MCF 10A (cell line): ENCODE measurements at regions of chr6 and their contacts with region 1.

Region 1: DNA sequence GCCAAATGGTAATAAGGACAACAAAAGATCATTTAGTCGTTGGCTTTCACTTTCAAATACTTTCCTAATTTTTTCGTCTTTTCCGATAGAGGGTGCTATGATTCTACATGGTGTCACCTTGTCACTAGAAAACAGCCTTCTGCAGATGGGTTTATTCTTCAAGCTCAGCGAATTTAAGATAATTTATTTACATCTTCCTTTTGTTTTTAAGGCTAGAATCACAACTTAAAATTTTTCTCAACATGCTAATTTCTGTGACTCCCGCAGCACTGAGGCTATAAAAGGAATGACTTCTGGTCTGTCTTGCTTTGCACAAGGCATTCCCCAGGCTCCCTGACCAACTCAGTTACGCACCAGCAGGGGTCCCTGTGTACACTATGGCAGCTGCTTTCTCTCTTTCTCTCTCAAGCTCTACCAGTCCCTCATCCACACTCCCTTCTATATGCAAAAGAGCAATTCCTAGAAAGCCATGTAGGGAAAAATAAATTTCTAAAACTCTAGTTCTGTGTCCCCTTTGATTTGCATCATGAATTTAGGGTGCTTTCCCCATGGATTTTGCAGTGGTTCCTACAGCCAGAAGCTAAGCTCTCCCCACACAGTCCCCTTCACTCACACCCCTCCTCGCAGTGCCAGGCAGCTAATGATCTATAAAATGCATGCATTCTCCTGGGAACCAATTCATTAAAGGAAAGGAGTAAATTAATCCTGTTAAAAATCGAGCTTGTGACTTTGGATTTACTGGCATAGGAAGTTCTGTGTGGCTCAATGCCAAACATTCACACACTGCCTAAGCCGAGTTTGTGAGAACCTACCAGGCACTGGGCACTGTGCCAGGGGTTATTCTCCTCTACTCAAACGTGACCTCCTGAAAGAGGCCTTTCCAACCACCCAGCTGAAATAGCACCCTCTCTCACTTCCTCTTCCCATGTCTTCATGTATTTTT is 74.5 kb downstream of the DCDC2 start:
- DNase-seq: peak; percentile 82
- H3K4me3 Mint-ChIP-seq: peak overlapping the region; percentile 52
- H3K27ac Mint-ChIP-seq: no peak overlapping the region
- H3K4me1 Mint-ChIP-seq: no peaks in the 10 kb centered on the region
- H3K27me3 Mint-ChIP-seq: peaks cover 13% of the 10 kb centered on the region
- CTCF ChIP-seq: peak; percentile 75

Region 2: DNA sequence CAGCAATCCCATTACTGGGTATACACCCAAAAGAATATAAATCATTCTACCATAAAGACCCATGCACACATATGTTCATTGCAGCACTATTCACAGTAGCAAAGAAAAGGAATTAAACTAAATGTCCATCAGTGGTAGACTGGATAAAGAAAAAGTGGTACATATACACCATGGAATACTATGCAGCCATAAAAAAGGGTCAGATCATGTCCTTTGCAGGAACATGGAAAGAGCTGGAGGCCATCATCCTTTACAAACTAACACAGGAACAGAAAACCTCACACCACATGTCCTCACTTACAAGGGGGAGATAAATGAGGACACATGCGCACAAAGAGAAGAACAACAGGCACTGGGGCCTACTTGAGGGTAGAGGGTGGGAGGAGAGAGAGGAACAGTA is 13.6 kb after region 1 on chr6:
- CTCF ChIA-PET with region 1: interaction called, 22 read pairs
- POLR2A ChIA-PET with region 1: no interaction called
- intact Hi-C with region 1: no loop called
- DNase-seq: no peak
- H3K4me3 Mint-ChIP-seq: no peak overlapping the region
- H3K27ac Mint-ChIP-seq: no peak overlapping the region
- H3K4me1 Mint-ChIP-seq: no peaks in the 10 kb centered on the region
- H3K27me3 Mint-ChIP-seq: no peaks in the 10 kb centered on the region
- CTCF ChIP-seq: no peak

Region 3: GRCh38 chr6:24313251-24314141 is 30.2 kb after region 1 on chr6:
- CTCF ChIA-PET with region 1: interaction called, 13 read pairs
- POLR2A ChIA-PET with region 1: interaction called, 4 read pairs
- intact Hi-C with region 1: no loop called
- DNase-seq: peak; percentile 38
- H3K4me3 Mint-ChIP-seq: no peak overlapping the region
- H3K27ac Mint-ChIP-seq: no peak overlapping the region
- H3K4me1 Mint-ChIP-seq: peaks cover 10% of the 10 kb centered on the region
- H3K27me3 Mint-ChIP-seq: no peaks in the 10 kb centered on the region
- CTCF ChIP-seq: no peak

Region 4: GRCh38 chr6:24359640-24360454 is 76.5 kb after region 1 on chr6:
- CTCF ChIA-PET with region 1: interaction called, 27 read pairs
- POLR2A ChIA-PET with region 1: no interaction called
- intact Hi-C with region 1: loop called (anchors 1 kb)
- DNase-seq: peak; percentile 75
- H3K4me3 Mint-ChIP-seq: peak overlapping the region; percentile 74
- H3K27ac Mint-ChIP-seq: peak overlapping the region; percentile 83
- H3K4me1 Mint-ChIP-seq: peaks cover 4% of the 10 kb centered on the region
- H3K27me3 Mint-ChIP-seq: peaks cover 9% of the 10 kb centered on the region
- CTCF ChIP-seq: peak; percentile 83

Region 5: DNA sequence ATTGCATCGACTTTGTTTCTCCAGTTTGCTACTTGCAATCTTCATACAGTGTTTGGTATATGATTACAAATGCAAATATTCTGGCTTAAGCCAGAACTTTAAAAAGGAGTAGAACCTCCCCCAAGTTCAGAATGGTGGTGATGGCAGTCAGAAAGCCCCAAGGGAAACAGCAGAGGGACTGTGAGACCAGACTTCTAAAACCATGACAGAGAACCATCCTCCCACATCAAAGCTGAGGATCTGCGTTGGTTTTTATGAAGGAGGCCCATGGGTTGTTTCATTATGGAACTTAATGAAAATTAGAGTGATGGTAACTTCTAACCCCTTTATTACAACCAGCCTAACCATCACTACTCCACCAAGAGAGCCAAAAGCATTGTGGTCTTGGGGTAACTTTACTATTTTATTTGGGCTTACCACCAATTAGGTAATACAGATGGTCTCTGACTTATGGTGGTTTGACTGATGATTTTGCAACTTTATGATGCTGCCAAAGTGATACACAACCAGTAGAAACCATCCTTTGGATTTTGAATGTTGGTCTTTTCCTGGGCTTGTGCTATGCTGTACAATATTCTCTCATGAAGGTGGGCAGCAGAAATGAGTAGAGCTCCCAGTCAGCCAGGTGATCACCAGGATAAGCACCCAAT is 108.6 kb after region 1 on chr6:
- CTCF ChIA-PET with region 1: interaction called, 140 read pairs
- POLR2A ChIA-PET with region 1: interaction called, 18 read pairs
- intact Hi-C with region 1: loop called (anchors 1 kb)
- DNase-seq: no peak
- H3K4me3 Mint-ChIP-seq: no peak overlapping the region
- H3K27ac Mint-ChIP-seq: no peak overlapping the region
- H3K4me1 Mint-ChIP-seq: peaks cover 17% of the 10 kb centered on the region
- H3K27me3 Mint-ChIP-seq: no peaks in the 10 kb centered on the region
- CTCF ChIP-seq: no peak

Region 6: GRCh38 chr6:24520929-24521546 is 237.7 kb after region 1 on chr6:
- CTCF ChIA-PET with region 1: interaction called, 4 read pairs
- POLR2A ChIA-PET with region 1: no interaction called
- intact Hi-C with region 1: loop called (anchors 2 kb)
- DNase-seq: peak; percentile 63
- H3K4me3 Mint-ChIP-seq: no peak overlapping the region
- H3K27ac Mint-ChIP-seq: no peak overlapping the region
- H3K4me1 Mint-ChIP-seq: peaks cover 9% of the 10 kb centered on the region
- H3K27me3 Mint-ChIP-seq: no peaks in the 10 kb centered on the region
- CTCF ChIP-seq: peak; percentile 55

Region 7: GRCh38 chr6:25732468-25733198 is 1449.3 kb after region 1 on chr6:
- CTCF ChIA-PET with region 1: no interaction called
- POLR2A ChIA-PET with region 1: no interaction called
- intact Hi-C with region 1: no loop called
- DNase-seq: no peak
- H3K4me3 Mint-ChIP-seq: no peak overlapping the region
- H3K27ac Mint-ChIP-seq: no peak overlapping the region
- H3K4me1 Mint-ChIP-seq: no peaks in the 10 kb centered on the region
- H3K27me3 Mint-ChIP-seq: peaks cover 50% of the 10 kb centered on the region
- CTCF ChIP-seq: no peak